ENCODE measurements at regions of chr22 and their contacts with region 1.

Region 1: DNA sequence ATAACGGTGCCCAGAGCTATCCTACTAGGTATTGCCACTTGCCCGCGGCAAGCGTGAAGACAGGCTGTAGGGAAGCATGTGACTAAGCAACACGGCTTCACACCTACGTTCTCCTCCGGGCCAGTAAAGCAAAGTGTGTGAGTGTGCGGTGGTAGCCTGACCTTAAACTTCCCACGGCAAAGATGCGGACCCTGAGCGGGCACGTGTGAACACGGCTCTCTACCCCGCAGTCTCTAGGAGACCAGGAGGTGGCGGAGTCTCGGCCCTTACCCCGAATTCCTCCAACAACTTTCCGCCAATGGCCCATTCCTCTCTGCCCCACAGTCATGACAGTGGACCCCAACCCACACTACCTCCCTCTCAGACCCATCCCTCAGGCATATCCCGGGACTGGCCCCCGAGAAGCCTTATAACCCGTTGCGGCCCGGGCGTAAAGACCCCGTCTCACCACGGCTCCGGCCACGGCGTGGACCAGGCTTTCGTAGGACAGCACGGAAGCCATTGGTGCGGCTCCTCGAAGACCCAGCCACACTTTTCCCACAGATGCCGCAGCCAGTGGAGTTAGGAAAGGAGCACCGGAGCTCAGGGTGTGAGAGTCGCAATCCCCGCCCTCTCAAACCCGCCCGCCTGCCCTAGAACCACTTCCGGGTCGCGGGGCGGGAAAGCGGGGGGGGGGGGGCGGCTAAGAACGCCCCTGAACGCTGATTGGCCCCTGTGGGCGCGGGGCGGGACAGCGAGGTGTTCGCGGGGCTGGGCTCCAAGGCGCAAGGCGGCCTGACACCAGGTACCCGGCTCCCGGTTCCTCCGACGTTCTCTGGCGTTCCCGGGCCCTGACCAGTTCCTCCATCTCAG is at the start of gene SLC25A17:
- DNase-seq: peak; percentile 87 to 93
- H3K4me3 ChIP-seq: peak within 1 kb of the TSS; percentile 69 to 93
- H3K27ac ChIP-seq: peak within 1 kb of the TSS; percentile 70 to 88
- H3K4me1 ChIP-seq: peaks cover 0 to 29% (median 16%) of the 10 kb centered on the region in 4 donors
- H3K27me3 ChIP-seq: no peaks in the 10 kb centered on the region
- CTCF ChIP-seq: peak; percentile 36 to 45

Region 2: GRCh38 chr22:40533712-40534378 is 285.1 kb before region 1 on chr22:
- intact Hi-C with region 1: no loop called
- DNase-seq: no peak
- H3K4me3 ChIP-seq: peak overlapping the region; percentile 42 to 49
- H3K27ac ChIP-seq: peak overlapping the region; percentile 81 to 83
- H3K4me1 ChIP-seq: peaks cover 4 to 69% (median 38%) of the 10 kb centered on the region in 4 donors
- H3K27me3 ChIP-seq: no peaks in the 10 kb centered on the region
- CTCF ChIP-seq: no peak

Region 3: DNA sequence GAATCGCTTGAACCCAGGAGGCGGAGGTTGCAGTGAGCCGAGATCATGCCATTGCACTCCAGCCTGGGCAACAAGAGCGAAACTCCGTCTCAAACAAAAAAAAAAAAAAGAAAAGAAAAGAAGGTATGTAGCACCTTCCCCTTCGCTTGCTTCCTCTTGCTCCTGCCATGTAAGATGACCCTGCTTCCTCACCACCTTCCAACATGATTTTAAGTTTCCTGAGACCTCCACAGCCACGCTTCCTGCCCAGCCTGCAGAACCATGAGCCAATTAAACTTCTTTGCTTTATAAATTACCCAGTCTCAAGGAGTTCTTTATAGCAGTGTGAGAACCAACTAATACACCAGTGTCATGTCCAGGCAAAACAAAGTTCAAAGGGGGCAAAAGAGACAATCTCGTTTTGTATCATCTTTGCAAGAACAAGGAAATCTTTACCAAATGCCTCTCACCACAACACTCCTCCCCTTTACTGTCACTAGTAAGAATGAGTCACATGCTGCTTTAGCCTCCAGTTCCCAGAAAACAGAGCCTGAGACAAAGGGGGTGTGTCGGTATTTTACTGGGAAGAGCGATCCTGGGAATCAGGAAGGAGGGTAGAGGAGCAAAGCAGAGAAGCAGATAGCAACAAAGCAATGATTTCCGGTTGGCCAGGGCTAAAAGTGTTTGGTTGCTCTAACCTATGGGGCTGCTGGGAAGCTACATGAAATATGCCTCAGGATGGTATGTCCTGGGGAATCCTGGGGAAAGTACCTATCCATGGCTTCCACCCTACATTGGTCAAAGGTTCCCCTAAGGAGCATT is 150.2 kb before region 1 on chr22:
- intact Hi-C with region 1: loop called (anchors 5 kb)
- DNase-seq: no peak
- H3K4me3 ChIP-seq: no peak overlapping the region
- H3K27ac ChIP-seq: no peak overlapping the region
- H3K4me1 ChIP-seq: peaks cover 0 to 33% (median 27%) of the 10 kb centered on the region in 4 donors
- H3K27me3 ChIP-seq: no peaks in the 10 kb centered on the region
- CTCF ChIP-seq: no peak